Activated CD4-positive, alpha-beta memory T cell treated with anti-CD3 and anti-CD28 coated beads for 36 hours (primary cell): ENCODE measurements at regions of chr13 and their contacts with region 1.

Region 1: GRCh38 chr13:30224732-30225131 is 82.6 kb downstream of the KATNAL1 start:
- DNase-seq: no peak
- H3K4me3 Mint-ChIP-seq: no peak overlapping the region
- H3K27ac Mint-ChIP-seq: peak overlapping the region; percentile 46
- H3K4me1 Mint-ChIP-seq: peaks cover 17% of the 10 kb centered on the region
- H3K27me3 Mint-ChIP-seq: no peaks in the 10 kb centered on the region

Region 2: GRCh38 chr13:30204564-30204963 is 20.2 kb before region 1 on chr13:
- CTCF ChIA-PET with region 1: no interaction called
- POLR2A ChIA-PET with region 1: interaction called, 8 read pairs
- intact Hi-C with region 1: loop called (anchors 1 kb)
- DNase-seq: peak; percentile 39
- H3K4me3 Mint-ChIP-seq: no peak overlapping the region
- H3K27ac Mint-ChIP-seq: no peak overlapping the region
- H3K4me1 Mint-ChIP-seq: peaks cover 8% of the 10 kb centered on the region
- H3K27me3 Mint-ChIP-seq: no peaks in the 10 kb centered on the region